A673 (cell line): ENCODE measurements at regions of chr17 and their contacts with region 1.

Region 1: GRCh38 chr17:59669944-59670343 is 37.3 kb downstream of the PTRH2 start:
- DNase-seq: no peak
- H3K4me3 ChIP-seq: no peak overlapping the region
- H3K27ac ChIP-seq: no peak overlapping the region
- H3K4me1 ChIP-seq: no peaks in the 10 kb centered on the region
- H3K27me3 ChIP-seq: no peaks in the 10 kb centered on the region
- CTCF ChIP-seq: no peak

Region 2: GRCh38 chr17:59702304-59702703 is 32.4 kb after region 1 on chr17:
- CTCF ChIA-PET with region 1: no interaction called
- POLR2A ChIA-PET with region 1: interaction called, 10 read pairs
- intact Hi-C with region 1: no loop called
- DNase-seq: no peak
- H3K4me3 ChIP-seq: no peak overlapping the region
- H3K27ac ChIP-seq: no peak overlapping the region
- H3K4me1 ChIP-seq: peaks cover 16% of the 10 kb centered on the region
- H3K27me3 ChIP-seq: no peaks in the 10 kb centered on the region
- CTCF ChIP-seq: no peak